Activated CD4-positive, alpha-beta memory T cell treated with anti-CD3 and anti-CD28 coated beads for 36 hours (primary cell): ENCODE measurements at regions of chr6 and their contacts with region 1.

Region 1: GRCh38 chr6:37239950-37240713 is 17.4 kb upstream of the TBC1D22B start:
- DNase-seq: peak; percentile 91
- H3K4me3 Mint-ChIP-seq: peak overlapping the region; percentile 2
- H3K27ac Mint-ChIP-seq: peak overlapping the region; percentile 88
- H3K4me1 Mint-ChIP-seq: peaks cover 41% of the 10 kb centered on the region
- H3K27me3 Mint-ChIP-seq: no peaks in the 10 kb centered on the region

Region 2: GRCh38 chr6:37285861-37286311 is 45.8 kb after region 1 on chr6:
- CTCF ChIA-PET with region 1: no interaction called
- POLR2A ChIA-PET with region 1: no interaction called
- intact Hi-C with region 1: loop called (anchors 1 kb)
- DNase-seq: peak; percentile 61
- H3K4me3 Mint-ChIP-seq: no peak overlapping the region
- H3K27ac Mint-ChIP-seq: peak overlapping the region; percentile 72
- H3K4me1 Mint-ChIP-seq: peaks cover 43% of the 10 kb centered on the region
- H3K27me3 Mint-ChIP-seq: no peaks in the 10 kb centered on the region

Region 3: GRCh38 chr6:37338745-37339255 is 98.7 kb after region 1 on chr6:
- CTCF ChIA-PET with region 1: no interaction called
- POLR2A ChIA-PET with region 1: no interaction called
- intact Hi-C with region 1: no loop called
- DNase-seq: no peak
- H3K4me3 Mint-ChIP-seq: no peak overlapping the region
- H3K27ac Mint-ChIP-seq: no peak overlapping the region
- H3K4me1 Mint-ChIP-seq: no peaks in the 10 kb centered on the region
- H3K27me3 Mint-ChIP-seq: peaks cover 4% of the 10 kb centered on the region

Region 4: DNA sequence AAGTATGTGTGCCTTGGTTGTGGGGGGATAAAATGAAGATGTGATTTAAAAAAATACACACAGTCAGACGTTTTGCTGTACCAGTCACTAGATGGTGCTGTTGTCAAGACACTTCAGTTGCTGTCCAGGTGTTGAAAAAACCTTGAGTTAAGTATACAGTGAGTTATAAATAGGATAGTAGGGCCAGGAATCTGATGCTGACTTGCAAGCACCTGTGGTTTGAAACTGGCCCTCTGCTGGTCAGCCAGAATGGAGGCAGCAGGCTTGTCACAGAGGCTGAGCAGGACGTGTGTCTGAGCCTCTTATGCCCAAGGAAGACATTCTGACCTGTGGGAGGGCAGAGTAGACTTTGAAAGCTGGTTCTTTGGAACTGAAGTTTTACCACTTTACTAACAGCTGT is 141.4 kb after region 1 on chr6:
- CTCF ChIA-PET with region 1: no interaction called
- POLR2A ChIA-PET with region 1: no interaction called
- intact Hi-C with region 1: no loop called
- DNase-seq: peak; percentile 16
- H3K4me3 Mint-ChIP-seq: no peak overlapping the region
- H3K27ac Mint-ChIP-seq: no peak overlapping the region
- H3K4me1 Mint-ChIP-seq: no peaks in the 10 kb centered on the region
- H3K27me3 Mint-ChIP-seq: no peaks in the 10 kb centered on the region

Region 5: DNA sequence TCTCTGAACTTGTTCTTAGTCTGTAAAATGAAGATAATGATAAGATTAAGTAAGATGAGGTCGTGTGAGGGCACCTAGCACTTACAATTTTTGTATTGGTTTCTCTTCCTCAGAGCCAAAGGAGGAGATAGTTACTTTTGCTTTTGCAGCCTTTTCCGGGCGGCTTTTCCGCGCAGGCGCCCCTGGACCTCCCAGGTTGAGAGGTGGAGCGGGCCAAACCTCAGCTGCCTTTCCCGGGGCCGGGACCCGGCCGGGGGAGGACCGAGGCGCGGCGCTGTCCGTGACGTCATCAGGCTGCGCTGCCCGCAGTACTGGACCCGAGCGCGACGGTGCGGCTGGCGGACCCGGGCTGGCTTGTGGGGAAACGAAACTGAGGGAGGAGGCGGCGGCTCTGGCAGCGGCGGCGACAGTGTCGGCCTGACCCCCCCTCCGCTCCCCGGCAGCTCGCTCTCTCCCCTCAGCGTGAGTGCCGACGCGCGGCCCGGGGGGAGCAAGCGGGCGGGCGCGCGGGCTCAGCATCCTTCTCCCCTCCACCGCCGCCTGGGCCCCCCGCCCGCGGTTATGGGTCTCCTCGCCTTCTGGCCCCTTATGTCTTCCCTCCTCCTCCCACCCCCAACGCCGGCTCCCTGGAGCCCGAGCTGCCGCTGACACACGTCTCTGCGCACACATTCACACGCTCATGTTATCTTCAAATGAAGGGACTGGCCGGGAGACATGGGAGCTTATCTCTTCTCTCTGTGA is 193.0 kb after region 1 on chr6 and contains the start of gene CMTR1:
- CTCF ChIA-PET with region 1: no interaction called
- POLR2A ChIA-PET with region 1: no interaction called
- intact Hi-C with region 1: loop called (anchors 5 kb)
- DNase-seq: peak; percentile 98
- H3K4me3 Mint-ChIP-seq: peak within 1 kb of the TSS; percentile 91
- H3K27ac Mint-ChIP-seq: peak within 1 kb of the TSS; percentile 98
- H3K4me1 Mint-ChIP-seq: peaks cover 44% of the 10 kb centered on the region
- H3K27me3 Mint-ChIP-seq: peaks cover 2% of the 10 kb centered on the region
- total RNA-seq, gene CMTR1: 69.2 to 70.1 TPM

Region 6: DNA sequence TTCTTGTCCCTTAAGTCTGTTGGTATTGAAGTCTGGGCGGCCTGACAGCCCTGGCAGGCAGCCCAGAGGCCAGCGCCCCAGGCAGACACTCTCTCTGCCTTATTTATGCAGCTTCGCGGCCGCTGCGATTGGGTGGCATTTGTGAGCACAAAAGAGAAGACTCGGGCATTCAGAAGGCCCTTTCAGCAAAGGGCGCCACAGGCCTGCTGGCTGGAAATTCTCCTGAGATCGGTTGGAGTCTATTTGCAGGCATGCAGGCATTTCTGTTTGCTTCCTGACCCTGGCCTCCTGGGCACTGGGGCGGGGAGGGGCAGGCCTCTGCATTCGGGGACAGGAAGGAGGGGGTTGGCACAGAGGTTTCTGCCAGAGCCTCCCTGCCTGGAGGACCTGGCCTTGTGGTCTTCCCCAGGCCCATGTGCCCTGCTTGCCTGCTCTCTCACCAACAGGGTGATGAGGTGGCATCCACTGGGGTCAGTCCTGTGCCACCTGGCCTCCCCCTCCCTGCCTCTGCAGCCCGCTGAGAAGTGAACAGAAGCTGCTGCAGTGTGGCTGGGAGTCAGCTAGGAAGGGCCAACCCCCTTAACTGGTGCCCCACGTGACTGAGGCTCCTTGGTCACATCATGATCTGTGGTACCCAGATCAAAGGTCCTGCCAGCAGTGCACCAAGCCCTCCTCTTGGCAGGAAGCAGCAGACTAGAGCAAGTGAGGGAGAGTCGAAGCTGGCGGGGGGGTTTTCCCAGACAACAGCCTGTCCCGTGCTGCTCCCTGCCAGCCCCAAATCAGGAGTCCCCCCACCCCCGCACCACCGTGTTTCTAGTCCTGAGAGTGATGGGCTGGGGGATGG is 276.2 kb after region 1 on chr6:
- CTCF ChIA-PET with region 1: no interaction called
- POLR2A ChIA-PET with region 1: no interaction called
- intact Hi-C with region 1: loop called (anchors 5 kb)
- DNase-seq: peak; percentile 96
- H3K4me3 Mint-ChIP-seq: peak overlapping the region; percentile 78
- H3K27ac Mint-ChIP-seq: peak overlapping the region; percentile 95
- H3K4me1 Mint-ChIP-seq: peaks cover 82% of the 10 kb centered on the region
- H3K27me3 Mint-ChIP-seq: no peaks in the 10 kb centered on the region